Naive thymus-derived CD4-positive, alpha-beta T cell (primary cell): ENCODE measurements at regions of chr9 and their contacts with region 1.

Region 1: GRCh38 chr9:137445275-137445807 is 4.2 kb upstream of the ENTPD8 start:
- DNase-seq: peak; percentile 65 to 88 (median 76)
- ATAC-seq: peak; percentile 82
- H3K4me3 ChIP-seq: no peak overlapping the region
- H3K4me3 Mint-ChIP-seq: peak overlapping the region in 4 of 10 donors; percentile 11 to 54 (median 40)
- H3K27ac ChIP-seq: no peak overlapping the region
- H3K27ac Mint-ChIP-seq: peak overlapping the region in 5 of 9 donors; percentile 2 to 77 (median 72)
- H3K4me1 ChIP-seq: peaks cover 10 to 18% of the 10 kb centered on the region in 2 donors
- H3K4me1 Mint-ChIP-seq: peaks cover 11 to 47% (median 33%) of the 10 kb centered on the region in 7 donors
- H3K27me3 ChIP-seq: no peaks in the 10 kb centered on the region
- H3K27me3 Mint-ChIP-seq: peaks cover 5 to 21% (median 10%) of the 10 kb centered on the region in 5 donors

Region 2: DNA sequence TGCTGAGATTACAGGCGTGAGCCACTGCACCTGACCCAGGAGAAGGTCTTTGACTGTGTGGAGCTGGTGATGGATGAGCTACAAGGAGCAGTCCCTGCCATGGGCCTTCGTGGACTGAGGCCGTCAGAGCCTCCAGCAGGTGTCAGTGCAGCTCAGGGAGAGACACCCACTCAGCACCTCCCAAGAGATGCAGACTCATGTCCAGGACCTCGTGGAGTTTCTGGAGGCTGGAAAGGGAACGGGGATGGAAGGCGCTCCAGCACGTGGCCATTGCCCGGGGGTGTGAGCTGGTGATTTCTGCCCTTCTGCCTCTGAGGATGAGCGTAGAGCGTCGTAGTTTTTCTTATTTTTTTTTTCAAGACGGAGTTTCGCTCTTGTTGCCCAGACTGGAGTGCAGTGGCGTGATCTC is 158.4 kb before region 1 on chr9:
- CTCF ChIA-PET with region 1: no interaction called
- POLR2A ChIA-PET with region 1: no interaction called
- intact Hi-C with region 1: loop called in 1 of 2 experiments (anchors 1 kb)
- DNase-seq: peak in 2 of 9 donors; percentile 8 to 29
- ATAC-seq: peak; percentile 56
- H3K4me3 ChIP-seq: no peak overlapping the region
- H3K4me3 Mint-ChIP-seq: peak overlapping the region in 1 of 10 donors; percentile 25
- H3K27ac ChIP-seq: no peak overlapping the region
- H3K27ac Mint-ChIP-seq: peak overlapping the region in 1 of 9 donors; percentile 31
- H3K4me1 ChIP-seq: no peaks in the 10 kb centered on the region
- H3K4me1 Mint-ChIP-seq: peaks cover 0 to 9% (median 0%) of the 10 kb centered on the region in 7 donors
- H3K27me3 ChIP-seq: no peaks in the 10 kb centered on the region
- H3K27me3 Mint-ChIP-seq: peaks cover 0 to 4% (median 0%) of the 10 kb centered on the region in 5 donors

Region 3: DNA sequence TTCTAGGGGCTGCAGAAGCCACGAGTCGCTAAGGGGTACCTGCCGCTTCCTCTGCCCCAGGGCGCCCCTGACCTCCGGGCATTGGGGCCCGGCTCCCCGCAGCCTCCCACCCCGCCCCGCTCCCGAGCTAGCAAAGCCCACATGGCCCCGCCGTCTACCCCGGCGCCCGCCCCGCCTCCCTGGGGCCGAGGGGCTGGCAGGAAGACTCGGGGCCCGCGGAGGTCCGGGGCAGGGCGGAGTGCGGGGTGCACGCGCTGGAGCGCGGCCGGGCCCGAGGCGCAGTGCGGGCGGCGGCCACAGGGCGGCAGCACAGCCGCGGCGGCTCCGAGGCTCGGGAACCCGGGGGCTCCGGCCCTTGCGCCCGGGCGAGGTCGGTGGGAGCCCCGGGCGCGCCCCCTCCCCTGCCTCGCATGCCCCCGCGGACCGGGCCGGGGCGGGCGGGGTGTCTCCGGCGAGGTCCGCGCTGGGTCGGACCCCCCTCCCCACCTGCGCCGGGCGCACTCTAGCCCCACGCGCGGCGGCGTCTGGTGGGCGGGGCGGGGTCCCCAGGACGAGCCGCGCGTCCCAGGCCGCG is 150.0 kb before region 1 on chr9:
- CTCF ChIA-PET with region 1: no interaction called
- POLR2A ChIA-PET with region 1: no interaction called
- intact Hi-C with region 1: loop called (anchors 2 kb)
- DNase-seq: peak in 7 of 9 donors; percentile 36 to 80 (median 54)
- ATAC-seq: peak; percentile 92
- H3K4me3 ChIP-seq: peak overlapping the region; percentile 27
- H3K4me3 Mint-ChIP-seq: peak overlapping the region in 8 of 10 donors; percentile 5 to 76 (median 54)
- H3K27ac ChIP-seq: no peak overlapping the region
- H3K27ac Mint-ChIP-seq: no peak overlapping the region
- H3K4me1 ChIP-seq: peaks cover under 1 to 6% of the 10 kb centered on the region in 2 donors
- H3K4me1 Mint-ChIP-seq: peaks cover 0 to 15% (median 9%) of the 10 kb centered on the region in 7 donors
- H3K27me3 ChIP-seq: peaks cover 12 to 30% of the 10 kb centered on the region in 2 donors
- H3K27me3 Mint-ChIP-seq: peaks cover 22 to 45% (median 26%) of the 10 kb centered on the region in 5 donors

Region 4: DNA sequence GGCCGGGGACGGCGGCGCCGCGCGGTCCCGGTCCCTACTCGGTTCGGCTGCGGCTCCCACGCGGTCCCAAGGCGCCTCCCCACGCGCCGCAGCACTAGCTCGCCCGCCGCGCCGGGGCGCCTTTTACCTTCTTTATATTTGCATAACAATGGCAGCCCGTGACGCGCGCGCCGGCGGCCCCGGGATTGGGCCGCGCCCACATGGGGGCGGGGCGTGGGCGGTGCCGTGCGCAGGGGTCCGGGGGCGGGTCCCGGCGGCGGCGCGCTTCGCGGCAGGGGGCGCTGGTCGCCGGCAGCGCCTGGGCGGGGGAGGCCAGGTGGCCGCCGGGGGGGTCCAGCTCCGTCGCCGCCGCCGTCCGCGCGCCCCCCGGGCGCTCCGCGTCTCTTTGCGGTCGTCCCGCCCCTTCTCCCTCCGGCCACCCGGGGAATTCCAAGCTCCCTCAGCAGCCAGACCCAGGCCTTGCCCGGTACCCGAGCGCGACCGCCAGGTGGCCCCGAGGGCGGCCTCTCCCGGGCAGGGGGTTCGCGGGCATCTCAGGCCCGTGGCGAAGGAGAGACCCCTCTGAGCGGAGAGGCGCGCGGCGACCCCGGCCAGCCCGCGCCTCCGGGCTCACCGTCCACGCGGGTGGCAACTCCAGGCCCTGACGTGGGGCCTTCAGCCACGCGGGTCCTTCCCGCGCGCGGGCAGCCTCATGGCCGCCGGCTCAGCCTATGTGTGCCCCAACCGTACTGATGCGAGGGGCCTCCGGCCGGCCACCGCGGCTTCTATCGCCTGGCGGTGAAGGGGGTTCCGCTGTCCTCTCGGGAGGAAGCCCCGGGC is 143.0 kb before region 1 on chr9 and contains the start of gene NRARP:
- CTCF ChIA-PET with region 1: interaction called, 3 read pairs
- POLR2A ChIA-PET with region 1: no interaction called
- intact Hi-C with region 1: loop called in 1 of 2 experiments (anchors 1 kb)
- DNase-seq: peak; percentile 90 to 97 (median 92)
- ATAC-seq: peak; percentile 95
- H3K4me3 ChIP-seq: peak within 1 kb of the TSS; percentile 56
- H3K4me3 Mint-ChIP-seq: peak within 1 kb of the TSS; percentile 50 to 88 (median 78)
- H3K27ac ChIP-seq: peak within 1 kb of the TSS; percentile 48
- H3K27ac Mint-ChIP-seq: peak within 1 kb of the TSS in 1 of 9 donors; percentile 26
- H3K4me1 ChIP-seq: peaks cover 7 to 27% of the 10 kb centered on the region in 2 donors
- H3K4me1 Mint-ChIP-seq: peaks cover 0 to 14% (median 11%) of the 10 kb centered on the region in 7 donors
- H3K27me3 ChIP-seq: peaks cover 15 to 19% of the 10 kb centered on the region in 2 donors
- H3K27me3 Mint-ChIP-seq: peaks cover 0 to 30% (median 5%) of the 10 kb centered on the region in 5 donors
- total RNA-seq, gene NRARP: 0.70 to 2.7 (median 1.7) TPM

Region 5: GRCh38 chr9:137423004-137423874 is 22.1 kb before region 1 on chr9 and contains the starts of genes EXD3 and NOXA1:
- CTCF ChIA-PET with region 1: interaction called, 19 read pairs
- POLR2A ChIA-PET with region 1: interaction called, 4 read pairs
- intact Hi-C with region 1: loop called (anchors 1 kb)
- DNase-seq: peak; percentile 84 to 99 (median 91)
- ATAC-seq: peak; percentile 97
- H3K4me3 ChIP-seq: peak within 1 kb of the TSS; percentile 65
- H3K4me3 Mint-ChIP-seq: peak within 1 kb of the TSS; percentile 76 to 90 (median 82)
- H3K27ac ChIP-seq: peak within 1 kb of the TSS; percentile 62
- H3K27ac Mint-ChIP-seq: peak within 1 kb of the TSS; percentile 28 to 91 (median 66)
- H3K4me1 ChIP-seq: peaks cover 0 to 5% of the 10 kb centered on the region in 2 donors
- H3K4me1 Mint-ChIP-seq: peaks cover 2 to 21% (median 13%) of the 10 kb centered on the region in 7 donors
- H3K27me3 ChIP-seq: no peaks in the 10 kb centered on the region
- H3K27me3 Mint-ChIP-seq: peaks cover 0 to 9% (median 0%) of the 10 kb centered on the region in 5 donors
- total RNA-seq, gene EXD3: 11.7 to 27.2 (median 24.7) TPM
- total RNA-seq, gene NOXA1: 0.94 to 11.1 (median 6.0) TPM

Region 6: GRCh38 chr9:137459147-137459600 is 13.8 kb after region 1 on chr9 and contains the start of gene NSMF:
- CTCF ChIA-PET with region 1: interaction called, 3 read pairs
- POLR2A ChIA-PET with region 1: interaction called, 7 read pairs
- intact Hi-C with region 1: loop called in 1 of 2 experiments (anchors 1 kb)
- DNase-seq: peak; percentile 90 to 99 (median 95)
- ATAC-seq: peak; percentile 89
- H3K4me3 ChIP-seq: peak within 1 kb of the TSS; percentile 67
- H3K4me3 Mint-ChIP-seq: peak within 1 kb of the TSS; percentile 55 to 79 (median 68)
- H3K27ac ChIP-seq: peak within 1 kb of the TSS; percentile 93
- H3K27ac Mint-ChIP-seq: peak within 1 kb of the TSS; percentile 28 to 98 (median 91)
- H3K4me1 ChIP-seq: peaks cover 36 to 54% of the 10 kb centered on the region in 2 donors
- H3K4me1 Mint-ChIP-seq: peaks cover 0 to 55% (median 33%) of the 10 kb centered on the region in 7 donors
- H3K27me3 ChIP-seq: no peaks in the 10 kb centered on the region
- H3K27me3 Mint-ChIP-seq: no peaks in the 10 kb centered on the region
- total RNA-seq, gene NSMF: 22.9 to 92.0 (median 57.3) TPM

Region 7: GRCh38 chr9:137506702-137507171 is 61.4 kb after region 1 on chr9:
- CTCF ChIA-PET with region 1: no interaction called
- POLR2A ChIA-PET with region 1: no interaction called
- intact Hi-C with region 1: no loop called
- DNase-seq: no peak
- ATAC-seq: no peak
- H3K4me3 ChIP-seq: no peak overlapping the region
- H3K4me3 Mint-ChIP-seq: no peak overlapping the region
- H3K27ac ChIP-seq: no peak overlapping the region
- H3K27ac Mint-ChIP-seq: no peak overlapping the region
- H3K4me1 ChIP-seq: no peaks in the 10 kb centered on the region
- H3K4me1 Mint-ChIP-seq: peaks cover 0 to 7% (median 1%) of the 10 kb centered on the region in 7 donors
- H3K27me3 ChIP-seq: no peaks in the 10 kb centered on the region
- H3K27me3 Mint-ChIP-seq: no peaks in the 10 kb centered on the region

Region 8: DNA sequence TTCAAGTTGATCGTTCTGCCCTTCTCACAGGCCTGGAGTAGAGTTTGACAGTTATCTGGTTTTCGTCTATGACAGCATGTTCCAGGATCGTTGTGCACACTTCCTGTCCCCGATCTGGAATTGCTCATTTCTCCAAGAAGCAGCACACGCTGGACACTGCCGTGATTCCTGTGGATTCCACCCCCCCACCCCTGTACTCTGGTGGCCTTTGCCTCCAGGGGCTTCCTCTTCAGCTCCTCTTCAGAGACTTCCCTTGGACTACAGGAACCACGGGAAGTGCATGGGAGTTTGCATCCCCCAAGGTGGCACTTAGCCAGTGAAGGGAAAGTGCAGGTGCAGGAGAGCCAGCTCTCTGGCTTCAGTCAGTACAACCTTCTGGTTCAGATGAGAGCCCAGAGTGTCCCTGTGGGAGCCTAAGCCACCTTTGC is 592.9 kb after region 1 on chr9:
- CTCF ChIA-PET with region 1: no interaction called
- POLR2A ChIA-PET with region 1: no interaction called
- intact Hi-C with region 1: no loop called
- DNase-seq: no peak
- ATAC-seq: no peak
- H3K4me3 ChIP-seq: no peak overlapping the region
- H3K4me3 Mint-ChIP-seq: no peak overlapping the region
- H3K27ac ChIP-seq: no peak overlapping the region
- H3K27ac Mint-ChIP-seq: no peak overlapping the region
- H3K4me1 ChIP-seq: no peaks in the 10 kb centered on the region
- H3K4me1 Mint-ChIP-seq: no peaks in the 10 kb centered on the region
- H3K27me3 ChIP-seq: peaks cover 0 to 3% of the 10 kb centered on the region in 2 donors
- H3K27me3 Mint-ChIP-seq: peaks cover 3 to 53% (median 30%) of the 10 kb centered on the region in 5 donors